PC-9 (cell line): ENCODE measurements at regions of chr10 and their contacts with region 1.

Region 1: GRCh38 chr10:63258920-63259678 is 126.0 kb downstream of the NRBF2 start:
- DNase-seq: no peak
- H3K4me3 ChIP-seq: no peak overlapping the region
- H3K27ac ChIP-seq: no peak overlapping the region; the same call in 1 of the 2 replicates
- H3K4me1 ChIP-seq: peaks cover 41% of the 10 kb centered on the region
- H3K27me3 ChIP-seq: no peaks in the 10 kb centered on the region
- CTCF ChIP-seq: no peak

Region 2: DNA sequence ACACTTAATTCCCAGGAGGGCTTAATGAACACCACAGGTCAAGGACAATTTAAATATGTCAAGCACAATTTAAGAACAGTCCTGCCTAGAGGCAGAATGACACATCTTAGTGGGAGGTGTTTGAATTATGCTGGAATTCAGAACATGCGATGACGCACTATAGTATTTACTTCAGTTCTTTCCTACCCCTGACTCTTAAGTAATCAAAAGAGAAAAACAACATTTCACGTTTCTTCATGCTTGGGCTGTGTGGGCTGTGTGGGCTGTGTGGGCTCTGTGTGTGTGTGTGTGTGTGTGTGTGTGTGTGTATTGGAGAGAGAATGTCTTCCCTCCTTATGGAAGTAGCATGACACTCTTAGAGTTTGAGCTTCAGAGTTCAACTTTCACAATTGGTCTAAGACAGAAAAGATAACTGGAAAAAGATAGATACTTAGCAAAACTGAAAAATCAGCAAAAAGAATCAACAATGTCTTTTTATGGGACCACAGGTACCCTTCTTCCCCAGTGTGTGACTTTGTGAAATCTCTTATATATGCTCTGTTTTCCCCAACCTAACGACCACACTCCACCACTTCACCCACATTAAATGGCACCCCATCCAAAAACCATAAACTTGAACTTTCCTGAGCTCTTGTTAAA is 1630.1 kb before region 1 on chr10:
- CTCF ChIA-PET with region 1: interaction called, 18 read pairs
- POLR2A ChIA-PET with region 1: no interaction called
- intact Hi-C with region 1: no loop called
- DNase-seq: peak; percentile 27 to 92
- H3K4me3 ChIP-seq: no peak overlapping the region
- H3K27ac ChIP-seq: 0 out of 2 replicates have a peak overlapping the region, but pooled peaks have one; percentile 35
- H3K4me1 ChIP-seq: peaks cover 42% of the 10 kb centered on the region
- H3K27me3 ChIP-seq: no peaks in the 10 kb centered on the region
- CTCF ChIP-seq: no peak

Region 3: GRCh38 chr10:63241841-63242281 is 17.2 kb before region 1 on chr10:
- CTCF ChIA-PET with region 1: no interaction called
- POLR2A ChIA-PET with region 1: no interaction called
- intact Hi-C with region 1: loop called (anchors 2 kb)
- DNase-seq: no peak
- H3K4me3 ChIP-seq: no peak overlapping the region
- H3K27ac ChIP-seq: no peak overlapping the region
- H3K4me1 ChIP-seq: peaks cover 22% of the 10 kb centered on the region
- H3K27me3 ChIP-seq: no peaks in the 10 kb centered on the region
- CTCF ChIP-seq: no peak